Esophagus muscularis mucosa (tissue), 4 donors: ENCODE measurements at regions of chr20 and their contacts with region 1.

Region 1: GRCh38 chr20:25623736-25624499 is at the start of gene NANP:
- DNase-seq: peak; percentile 97
- H3K4me3 ChIP-seq: peak within 1 kb of the TSS; percentile 79 to 98 (median 94)
- H3K27ac ChIP-seq: peak within 1 kb of the TSS; percentile 92 to 98 (median 94)
- H3K4me1 ChIP-seq: peaks cover 14 to 26% (median 21%) of the 10 kb centered on the region in 4 donors
- H3K27me3 ChIP-seq: peaks cover 0 to 7% (median 0%) of the 10 kb centered on the region in 4 donors
- CTCF ChIP-seq: peak in 1 of 3 experiments; percentile 26
- EP300 ChIP-seq: no peak
- POLR2A ChIP-seq: peak; percentile 65
- total RNA-seq, gene NANP: 2.1 to 6.0 (median 4.4) TPM

Region 2: GRCh38 chr20:25539742-25540672 is 83.9 kb before region 1 on chr20:
- intact Hi-C with region 1: loop called (anchors 10 kb)
- DNase-seq: no peak
- H3K4me3 ChIP-seq: peak overlapping the region; percentile 37 to 48 (median 46)
- H3K27ac ChIP-seq: peak overlapping the region; percentile 31 to 48 (median 38)
- H3K4me1 ChIP-seq: peaks cover 17 to 33% (median 26%) of the 10 kb centered on the region in 4 donors
- H3K27me3 ChIP-seq: no peaks in the 10 kb centered on the region
- CTCF ChIP-seq: peak; percentile 20 to 49 (median 32)
- EP300 ChIP-seq: no peak
- POLR2A ChIP-seq: no peak

Region 3: DNA sequence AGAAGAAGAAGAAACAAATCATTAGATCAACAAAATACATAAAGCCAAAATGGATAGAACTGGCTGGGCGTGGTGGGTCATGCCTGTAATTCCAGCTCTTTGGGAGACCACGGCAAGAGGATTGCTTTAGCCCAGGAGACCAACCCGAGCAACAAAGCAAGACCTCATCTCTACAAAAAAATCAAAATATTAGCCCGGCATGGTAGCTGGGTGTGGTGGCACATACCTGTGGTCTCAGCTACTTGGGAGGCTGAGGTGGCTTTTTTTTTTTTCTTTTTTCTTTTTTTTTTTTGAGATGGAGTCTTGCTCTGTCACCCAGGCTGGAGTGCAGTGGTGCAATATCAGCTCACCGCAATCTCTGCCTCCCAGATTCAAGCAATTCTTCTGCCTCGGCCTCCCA is 60.0 kb before region 1 on chr20:
- intact Hi-C with region 1: no loop called
- DNase-seq: no peak
- H3K4me3 ChIP-seq: no peak overlapping the region
- H3K27ac ChIP-seq: no peak overlapping the region
- H3K4me1 ChIP-seq: no peaks in the 10 kb centered on the region
- H3K27me3 ChIP-seq: no peaks in the 10 kb centered on the region
- CTCF ChIP-seq: no peak
- EP300 ChIP-seq: no peak
- POLR2A ChIP-seq: no peak

Region 4: GRCh38 chr20:25574425-25574824 is 49.5 kb before region 1 on chr20:
- intact Hi-C with region 1: no loop called
- DNase-seq: no peak
- H3K4me3 ChIP-seq: no peak overlapping the region
- H3K27ac ChIP-seq: no peak overlapping the region
- H3K4me1 ChIP-seq: peaks cover 0 to 7% (median 2%) of the 10 kb centered on the region in 4 donors
- H3K27me3 ChIP-seq: no peaks in the 10 kb centered on the region
- CTCF ChIP-seq: no peak
- EP300 ChIP-seq: no peak
- POLR2A ChIP-seq: no peak

Region 5: DNA sequence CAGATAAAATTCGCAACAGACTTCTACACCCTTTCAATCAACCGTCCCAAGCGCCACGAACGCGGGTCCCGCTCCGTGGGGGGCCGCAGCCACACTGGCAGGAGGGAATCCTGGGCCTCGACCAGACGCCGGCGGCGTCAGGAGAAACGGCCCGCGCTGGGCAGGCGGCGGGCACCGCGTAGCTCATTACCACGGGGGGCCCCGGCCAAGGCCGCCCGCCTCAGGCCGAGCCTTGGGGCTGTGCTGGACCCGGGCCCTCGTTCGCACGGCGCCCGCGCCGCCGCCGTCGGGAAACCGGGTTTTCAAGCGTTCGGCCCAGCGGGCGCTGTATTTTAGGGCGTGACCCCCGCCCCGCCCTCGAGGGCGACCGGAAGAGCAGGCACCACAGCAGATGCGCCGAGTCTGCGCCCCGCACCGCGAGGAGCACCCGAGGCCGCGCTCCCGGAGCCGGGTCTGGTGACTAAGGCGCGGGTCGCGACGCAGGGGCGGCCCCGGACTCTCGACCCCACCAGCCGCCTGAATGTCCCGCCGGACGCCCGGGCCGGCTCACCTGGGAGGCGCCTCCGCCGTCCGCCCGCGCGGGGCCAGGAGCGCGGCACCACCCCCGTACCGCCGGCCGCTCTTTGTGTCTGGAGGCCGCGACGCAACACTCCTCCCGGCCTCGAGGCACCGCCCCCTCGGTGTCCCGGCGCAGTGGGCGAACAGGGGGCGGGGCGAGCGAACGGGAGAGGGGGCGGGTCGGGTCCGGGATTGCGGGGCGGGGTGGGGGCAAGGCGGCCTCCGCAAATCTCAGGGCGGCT is 38.8 kb before region 1 on chr20 and contains the start of gene NINL:
- intact Hi-C with region 1: loop called (anchors 5 kb)
- DNase-seq: no peak
- H3K4me3 ChIP-seq: peak within 1 kb of the TSS; percentile 63 to 83 (median 76)
- H3K27ac ChIP-seq: peak within 1 kb of the TSS; percentile 55 to 75 (median 72)
- H3K4me1 ChIP-seq: peaks cover 11 to 25% (median 17%) of the 10 kb centered on the region in 4 donors
- H3K27me3 ChIP-seq: no peaks in the 10 kb centered on the region
- CTCF ChIP-seq: no peak
- EP300 ChIP-seq: no peak
- POLR2A ChIP-seq: no peak
- total RNA-seq, gene NINL: 3.0 to 5.8 (median 3.7) TPM

Region 6: DNA sequence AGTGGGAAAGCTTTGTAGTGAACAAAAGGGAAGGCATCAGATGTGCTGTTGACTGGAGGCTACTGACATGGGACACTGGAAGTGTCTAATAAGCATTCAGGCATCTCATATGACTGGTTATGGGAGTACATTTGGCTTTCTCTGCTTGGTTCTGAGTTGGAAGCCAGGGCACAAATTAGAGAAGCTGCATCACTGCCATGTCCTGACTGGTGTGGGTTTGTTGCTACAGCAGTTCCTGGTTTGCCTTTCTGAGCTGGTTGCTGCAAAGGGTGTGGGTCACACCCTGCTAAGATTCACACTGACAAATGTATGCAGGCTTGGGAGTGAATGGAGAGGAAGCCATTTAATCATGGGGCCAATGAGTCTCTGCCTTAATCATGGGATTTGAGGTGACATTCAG is 36.1 kb after region 1 on chr20:
- intact Hi-C with region 1: no loop called
- DNase-seq: no peak
- H3K4me3 ChIP-seq: no peak overlapping the region
- H3K27ac ChIP-seq: no peak overlapping the region
- H3K4me1 ChIP-seq: no peaks in the 10 kb centered on the region
- H3K27me3 ChIP-seq: no peaks in the 10 kb centered on the region
- CTCF ChIP-seq: no peak
- EP300 ChIP-seq: no peak
- POLR2A ChIP-seq: no peak

Region 7: GRCh38 chr20:25685276-25686080 is 61.6 kb after region 1 on chr20:
- intact Hi-C with region 1: no loop called
- DNase-seq: peak; percentile 82
- H3K4me3 ChIP-seq: no peak overlapping the region
- H3K27ac ChIP-seq: no peak overlapping the region
- H3K4me1 ChIP-seq: no peaks in the 10 kb centered on the region
- H3K27me3 ChIP-seq: no peaks in the 10 kb centered on the region
- CTCF ChIP-seq: no peak
- EP300 ChIP-seq: no peak
- POLR2A ChIP-seq: no peak

Region 8: DNA sequence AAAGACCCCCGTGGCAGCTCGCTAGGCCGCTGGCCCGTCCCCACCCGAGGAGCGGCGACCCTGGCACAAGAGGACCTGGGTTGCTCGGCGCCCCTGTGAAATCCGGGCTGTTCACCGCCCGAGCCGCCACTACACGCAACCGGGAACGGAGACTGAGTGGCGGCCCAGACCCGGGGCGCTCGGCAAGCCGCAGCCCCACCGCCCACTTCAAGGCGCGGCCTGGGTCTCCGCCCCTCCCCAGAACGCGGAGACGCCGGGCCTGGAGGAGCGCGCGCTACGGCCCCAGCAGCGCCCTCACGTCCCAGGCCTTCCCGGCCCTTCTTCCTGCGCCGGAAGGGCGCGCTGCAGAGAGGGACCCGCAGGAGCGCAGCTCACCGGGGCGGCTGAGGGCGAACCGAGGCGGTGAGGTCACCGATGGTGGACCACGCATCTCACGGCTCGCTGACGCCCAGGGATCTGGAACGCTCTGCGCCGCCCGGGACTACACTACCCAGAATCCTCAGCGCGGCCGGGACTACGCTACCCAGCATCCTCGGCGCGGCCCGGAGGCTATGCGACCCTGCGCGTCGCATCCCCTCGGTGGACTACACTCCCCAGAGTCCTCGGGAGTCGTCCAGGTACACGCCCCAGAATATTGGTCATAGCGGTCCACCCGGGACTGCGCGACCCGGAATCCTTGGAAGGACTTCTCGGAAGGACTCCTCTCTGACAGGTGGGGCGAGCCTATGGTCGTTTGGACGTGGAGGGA is 72.6 kb after region 1 on chr20 and contains the start of gene ZNF337:
- intact Hi-C with region 1: loop called (anchors 2 kb)
- DNase-seq: peak; percentile 98
- H3K4me3 ChIP-seq: peak within 1 kb of the TSS; percentile 87 to 93 (median 88)
- H3K27ac ChIP-seq: peak within 1 kb of the TSS; percentile 90 to 95 (median 92)
- H3K4me1 ChIP-seq: peaks cover 14 to 28% (median 22%) of the 10 kb centered on the region in 4 donors
- H3K27me3 ChIP-seq: no peaks in the 10 kb centered on the region
- CTCF ChIP-seq: peak in 1 of 3 experiments; percentile 11
- EP300 ChIP-seq: no peak
- POLR2A ChIP-seq: no peak
- total RNA-seq, gene ZNF337: 13.1 to 17.0 (median 14.8) TPM